ENCODE measurements at regions of chr11 and their contacts with region 1.

Region 1: GRCh38 chr11:44775366-44775984 is 48.7 kb downstream of the TSPAN18 start:
- DNase-seq: peak; percentile 79
- H3K4me3 Mint-ChIP-seq: no peak overlapping the region
- H3K27ac Mint-ChIP-seq: peak overlapping the region; percentile 30
- H3K4me1 Mint-ChIP-seq: no peaks in the 10 kb centered on the region
- H3K27me3 Mint-ChIP-seq: peaks cover 2% of the 10 kb centered on the region

Region 2: DNA sequence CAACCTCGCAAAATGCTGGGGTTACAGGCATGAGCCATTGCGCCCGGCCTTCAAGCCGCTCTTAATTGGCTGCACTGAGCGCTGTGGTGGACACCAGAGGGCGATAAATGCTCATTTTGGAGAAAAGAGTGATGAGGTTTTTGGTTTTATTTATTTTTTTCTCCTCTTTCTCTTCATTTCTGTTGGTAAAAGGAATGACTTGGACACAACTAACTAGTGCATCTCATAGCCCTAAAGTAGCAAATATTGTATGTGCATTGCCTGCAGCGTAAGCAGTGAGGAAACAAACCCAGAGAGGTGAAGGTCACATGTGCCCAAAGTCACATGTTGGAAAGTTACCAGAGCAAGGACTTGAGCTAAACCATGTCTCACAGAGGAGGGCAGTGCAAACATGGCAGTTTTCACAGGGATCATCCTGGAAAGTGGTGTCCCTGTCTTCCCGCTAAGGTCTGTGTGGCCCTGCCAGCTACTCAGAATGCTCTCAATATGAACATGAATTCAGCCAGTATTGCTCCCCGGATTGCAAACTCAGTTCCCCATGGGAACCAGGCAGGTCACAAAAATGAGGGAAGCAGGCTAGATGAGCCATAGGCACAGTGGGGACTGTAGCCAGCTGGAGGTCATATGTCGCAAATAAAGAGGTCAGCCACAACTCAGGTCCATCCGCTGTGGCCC is 218.6 kb before region 1 on chr11:
- intact Hi-C with region 1: loop called (anchors 5 kb)
- DNase-seq: peak; percentile 90
- H3K4me3 Mint-ChIP-seq: no peak overlapping the region
- H3K27ac Mint-ChIP-seq: peak overlapping the region; percentile 68
- H3K4me1 Mint-ChIP-seq: peaks cover 25% of the 10 kb centered on the region
- H3K27me3 Mint-ChIP-seq: peaks cover 4% of the 10 kb centered on the region

Region 3: GRCh38 chr11:44727373-44728287 is 47.8 kb before region 1 on chr11:
- intact Hi-C with region 1: loop called (anchors 5 kb)
- DNase-seq: peak; percentile 93
- H3K4me3 Mint-ChIP-seq: peak overlapping the region; percentile 87
- H3K27ac Mint-ChIP-seq: peak overlapping the region; percentile 10
- H3K4me1 Mint-ChIP-seq: peaks cover 38% of the 10 kb centered on the region
- H3K27me3 Mint-ChIP-seq: peaks cover 41% of the 10 kb centered on the region

Measured in activated CD4-positive, alpha-beta T cell treated with anti-CD3 and anti-CD28 coated beads, Interleukin-2, amount 10 ng/mL, durations not matched to agents 24 days and 14 days (primary cell).